Panc1 (cell line): ENCODE measurements at regions of chr5 and their contacts with region 1.

Region 1: GRCh38 chr5:173108914-173109313 is 35.4 kb upstream of the BNIP1 start:
- DNase-seq: no peak
- ATAC-seq: no peak
- H3K4me3 ChIP-seq: no peak overlapping the region
- H3K27ac ChIP-seq: no peak overlapping the region
- H3K4me1 ChIP-seq: no peaks in the 10 kb centered on the region
- H3K27me3 ChIP-seq: no peaks in the 10 kb centered on the region
- CTCF ChIP-seq: no peak

Region 2: DNA sequence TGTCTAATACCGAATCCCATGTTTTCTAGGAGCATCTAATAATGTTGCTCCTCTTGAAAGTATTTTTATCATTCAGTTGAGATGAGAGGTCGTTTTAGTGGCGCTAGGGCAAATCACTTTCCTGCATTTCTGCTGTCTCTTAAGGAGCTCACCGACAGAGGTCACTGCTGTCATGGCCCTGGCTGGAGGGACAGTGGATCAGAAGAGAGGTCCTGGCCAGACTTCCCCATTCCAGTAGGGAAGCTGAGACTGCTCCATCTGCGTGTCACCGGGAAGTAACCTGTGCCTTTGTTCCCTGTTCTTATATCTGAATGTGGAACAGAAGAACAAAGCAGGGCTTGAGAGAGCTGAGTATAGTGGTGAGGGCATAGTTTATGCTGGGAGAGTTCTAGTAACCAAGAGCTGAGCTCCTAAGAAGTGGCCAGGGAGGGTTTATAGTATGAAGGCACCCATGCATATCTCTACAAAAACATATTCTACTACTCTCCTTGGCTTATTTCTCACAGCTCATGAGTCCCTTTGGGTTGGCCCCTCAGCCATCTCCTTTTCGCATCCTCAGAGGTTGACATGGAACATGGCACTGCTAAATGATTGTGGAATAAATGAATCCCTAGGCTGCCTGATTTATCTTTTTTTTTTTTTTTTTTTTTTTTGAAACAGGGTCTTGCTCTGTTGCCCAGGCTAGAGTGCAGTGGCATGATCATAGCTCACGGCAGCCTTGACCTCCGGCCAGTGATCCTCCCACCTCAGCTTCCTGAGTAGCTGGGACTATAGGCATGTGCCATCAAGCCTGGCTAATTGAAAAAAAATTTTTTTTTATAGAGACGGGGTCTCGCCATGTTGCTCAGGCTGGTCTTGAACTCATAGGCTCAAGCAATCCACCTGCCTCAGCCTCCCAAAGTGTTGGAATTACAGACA is 98.1 kb before region 1 on chr5:
- CTCF ChIA-PET with region 1: no interaction called
- POLR2A ChIA-PET with region 1: no interaction called
- in situ Hi-C with region 1: no loop called
- intact Hi-C with region 1: no loop called
- DNase-seq: no peak
- ATAC-seq: peak; percentile 79
- H3K4me3 ChIP-seq: no peak overlapping the region
- H3K27ac ChIP-seq: no peak overlapping the region; the same call in 1 of the 2 replicates
- H3K4me1 ChIP-seq: peaks cover 11% of the 10 kb centered on the region
- H3K27me3 ChIP-seq: no peaks in the 10 kb centered on the region
- CTCF ChIP-seq: peak; percentile 67; the same call in 1 of the 2 replicates

Region 3: GRCh38 chr5:173065155-173065554 is 43.8 kb before region 1 on chr5:
- CTCF ChIA-PET with region 1: no interaction called
- POLR2A ChIA-PET with region 1: interaction called, 17 read pairs
- in situ Hi-C with region 1: no loop called
- intact Hi-C with region 1: no loop called
- DNase-seq: no peak
- ATAC-seq: no peak
- H3K4me3 ChIP-seq: no peak overlapping the region
- H3K27ac ChIP-seq: no peak overlapping the region
- H3K4me1 ChIP-seq: no peaks in the 10 kb centered on the region
- H3K27me3 ChIP-seq: no peaks in the 10 kb centered on the region
- CTCF ChIP-seq: no peak

Region 4: DNA sequence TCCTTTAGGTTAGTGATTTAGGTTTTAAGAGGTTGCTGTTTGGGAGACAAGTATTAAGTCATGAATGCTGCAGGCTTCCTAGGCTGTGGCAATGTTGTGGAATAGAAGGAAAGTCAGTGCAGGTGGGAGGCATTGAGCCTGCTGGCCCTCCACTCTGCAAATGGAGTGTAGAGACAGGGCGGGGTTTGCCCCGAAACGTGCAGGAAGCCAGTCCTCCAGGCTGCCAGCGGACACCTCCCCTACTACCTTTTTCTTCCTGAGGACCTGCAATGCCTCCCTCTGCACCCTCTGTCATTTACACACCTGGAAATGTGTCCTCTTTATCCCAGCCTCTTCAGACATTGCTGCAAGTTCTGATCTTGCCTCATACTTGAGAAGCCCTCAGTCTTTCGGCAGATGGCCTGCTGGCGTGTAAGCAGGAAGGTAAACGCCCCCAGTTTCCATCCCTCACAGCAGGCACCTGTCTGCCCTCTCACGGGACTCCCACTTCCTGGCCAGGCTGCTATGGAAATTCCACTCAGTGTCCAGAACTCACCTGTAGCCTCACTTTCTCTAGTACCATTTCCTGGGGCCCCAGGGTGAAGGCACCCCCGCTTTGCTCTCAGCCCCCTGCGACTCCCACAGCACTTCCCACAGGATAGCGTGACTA is 589.1 kb after region 1 on chr5:
- CTCF ChIA-PET with region 1: no interaction called
- POLR2A ChIA-PET with region 1: no interaction called
- in situ Hi-C with region 1: no loop called
- intact Hi-C with region 1: no loop called
- DNase-seq: no peak
- ATAC-seq: 0 out of 2 replicates have a peak, but pooled peaks have one; percentile 42
- H3K4me3 ChIP-seq: no peak overlapping the region
- H3K27ac ChIP-seq: no peak overlapping the region
- H3K4me1 ChIP-seq: no peaks in the 10 kb centered on the region
- H3K27me3 ChIP-seq: no peaks in the 10 kb centered on the region
- CTCF ChIP-seq: no peak